Natural killer cell (primary cell): ENCODE measurements at regions of chr17 and their contacts with region 1.

Region 1: GRCh38 chr17:74528491-74529199 is 2.6 kb downstream of the CD300LB start:
- DNase-seq: peak in 1 of 2 donors; percentile 15
- ATAC-seq: peak in 1 of 3 donors; percentile 36
- H3K4me3 ChIP-seq: no peak overlapping the region
- H3K4me3 Mint-ChIP-seq: no peak overlapping the region
- H3K27ac ChIP-seq: no peak overlapping the region
- H3K27ac Mint-ChIP-seq: no peak overlapping the region
- H3K4me1 ChIP-seq: peaks cover 27% of the 10 kb centered on the region
- H3K4me1 Mint-ChIP-seq: peaks cover 34 to 51% of the 10 kb centered on the region in 2 donors
- H3K27me3 ChIP-seq: no peaks in the 10 kb centered on the region
- H3K27me3 Mint-ChIP-seq: no peaks in the 10 kb centered on the region
- CTCF ChIP-seq: no peak

Region 2: GRCh38 chr17:74203439-74204240 is 325.0 kb before region 1 on chr17 and contains the start of gene RPL38:
- intact Hi-C with region 1: loop called (anchors 5 kb)
- DNase-seq: peak; percentile 93 to 98
- ATAC-seq: peak; percentile 89 to 98 (median 94)
- H3K4me3 ChIP-seq: peak within 1 kb of the TSS; percentile 91
- H3K4me3 Mint-ChIP-seq: peak within 1 kb of the TSS; percentile 98
- H3K27ac ChIP-seq: peak within 1 kb of the TSS; percentile 75
- H3K27ac Mint-ChIP-seq: peak within 1 kb of the TSS; percentile 90 to 95
- H3K4me1 ChIP-seq: peaks cover 45% of the 10 kb centered on the region
- H3K4me1 Mint-ChIP-seq: peaks cover 32 to 46% of the 10 kb centered on the region in 2 donors
- H3K27me3 ChIP-seq: peaks cover 4% of the 10 kb centered on the region
- H3K27me3 Mint-ChIP-seq: peaks cover 13 to 14% of the 10 kb centered on the region in 2 donors
- CTCF ChIP-seq: peak; percentile 88
- total RNA-seq, gene RPL38: 560 to 802 (median 759) TPM

Region 3: GRCh38 chr17:74296548-74296936 is 232.1 kb before region 1 on chr17:
- intact Hi-C with region 1: loop called (anchors 1 kb)
- DNase-seq: peak in 1 of 2 donors; percentile 68
- ATAC-seq: peak; percentile 42 to 61 (median 44)
- H3K4me3 ChIP-seq: no peak overlapping the region
- H3K4me3 Mint-ChIP-seq: no peak overlapping the region
- H3K27ac ChIP-seq: no peak overlapping the region
- H3K27ac Mint-ChIP-seq: no peak overlapping the region
- H3K4me1 ChIP-seq: peaks cover 5% of the 10 kb centered on the region
- H3K4me1 Mint-ChIP-seq: peaks cover 0 to 5% of the 10 kb centered on the region in 2 donors
- H3K27me3 ChIP-seq: no peaks in the 10 kb centered on the region
- H3K27me3 Mint-ChIP-seq: no peaks in the 10 kb centered on the region
- CTCF ChIP-seq: peak; percentile 11

Region 4: GRCh38 chr17:74368092-74369081 is 160.3 kb before region 1 on chr17:
- intact Hi-C with region 1: loop called (anchors 1 kb)
- DNase-seq: peak; percentile 78 to 87
- ATAC-seq: peak; percentile 76 to 90 (median 90)
- H3K4me3 ChIP-seq: no peak overlapping the region
- H3K4me3 Mint-ChIP-seq: peak overlapping the region; percentile 71
- H3K27ac ChIP-seq: no peak overlapping the region
- H3K27ac Mint-ChIP-seq: peak overlapping the region in 1 of 2 donors; percentile 75
- H3K4me1 ChIP-seq: peaks cover 20% of the 10 kb centered on the region
- H3K4me1 Mint-ChIP-seq: peaks cover 17 to 18% of the 10 kb centered on the region in 2 donors
- H3K27me3 ChIP-seq: peaks cover 2% of the 10 kb centered on the region
- H3K27me3 Mint-ChIP-seq: peaks cover 0 to 6% of the 10 kb centered on the region in 2 donors
- CTCF ChIP-seq: peak; percentile 93

Region 5: GRCh38 chr17:74379495-74380085 is 149.1 kb before region 1 on chr17:
- intact Hi-C with region 1: loop called (anchors 1 kb)
- DNase-seq: peak; percentile 92
- ATAC-seq: peak; percentile 82 to 90 (median 87)
- H3K4me3 ChIP-seq: no peak overlapping the region
- H3K4me3 Mint-ChIP-seq: peak overlapping the region; percentile 40
- H3K27ac ChIP-seq: peak overlapping the region; percentile 51
- H3K27ac Mint-ChIP-seq: peak overlapping the region; percentile 78 to 87
- H3K4me1 ChIP-seq: peaks cover 31% of the 10 kb centered on the region
- H3K4me1 Mint-ChIP-seq: peaks cover 30 to 32% of the 10 kb centered on the region in 2 donors
- H3K27me3 ChIP-seq: no peaks in the 10 kb centered on the region
- H3K27me3 Mint-ChIP-seq: no peaks in the 10 kb centered on the region
- CTCF ChIP-seq: peak; percentile 90

Region 6: DNA sequence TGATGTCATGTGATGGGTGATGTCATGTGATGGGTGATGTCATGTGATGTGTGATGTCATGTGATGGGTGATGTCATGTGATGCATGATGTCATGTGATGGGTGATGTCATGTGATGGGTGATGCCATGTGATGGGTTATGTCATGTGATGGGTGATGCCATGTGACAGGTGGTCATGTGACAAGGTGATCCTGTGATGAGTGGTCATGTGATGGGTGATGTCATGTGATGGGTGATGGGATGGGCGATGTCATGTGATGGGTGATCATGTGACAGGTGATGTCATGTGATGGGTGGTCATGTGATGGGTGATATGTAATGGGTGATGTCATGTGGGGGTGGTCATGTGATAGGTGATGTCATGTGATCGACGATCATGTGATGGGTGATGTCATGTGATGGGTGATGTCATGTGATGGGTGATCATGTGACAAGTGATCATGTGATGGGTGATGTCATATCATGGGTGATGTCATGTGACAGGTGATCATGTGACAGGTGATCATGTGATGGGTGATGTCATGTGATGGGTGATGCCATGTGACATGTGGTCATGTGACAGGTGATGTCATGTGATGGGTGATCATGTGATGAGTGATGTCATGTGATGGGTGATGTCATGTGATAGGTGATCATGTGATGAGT is 14.5 kb before region 1 on chr17:
- intact Hi-C with region 1: loop called (anchors 2 kb)
- DNase-seq: peak; percentile 78 to 79
- ATAC-seq: peak; percentile 48 to 71 (median 68)
- H3K4me3 ChIP-seq: no peak overlapping the region
- H3K4me3 Mint-ChIP-seq: peak overlapping the region; percentile 82
- H3K27ac ChIP-seq: peak overlapping the region; percentile 5
- H3K27ac Mint-ChIP-seq: peak overlapping the region; percentile 97
- H3K4me1 ChIP-seq: peaks cover 10% of the 10 kb centered on the region
- H3K4me1 Mint-ChIP-seq: peaks cover 13 to 16% of the 10 kb centered on the region in 2 donors
- H3K27me3 ChIP-seq: no peaks in the 10 kb centered on the region
- H3K27me3 Mint-ChIP-seq: peaks cover 8 to 10% of the 10 kb centered on the region in 2 donors
- CTCF ChIP-seq: no peak